ENCODE measurements at regions of chr6 and their contacts with region 1.

Region 1: GRCh38 chr6:28586962-28587745 is 61.5 kb downstream of the GPX5 start:
- DNase-seq: peak; percentile 28 to 73 (median 57)
- ATAC-seq: peak; percentile 82
- H3K4me3 ChIP-seq: peak overlapping the region; percentile 66
- H3K4me3 Mint-ChIP-seq: peak overlapping the region; percentile 90
- H3K27ac ChIP-seq: no peak overlapping the region
- H3K27ac Mint-ChIP-seq: peak overlapping the region; percentile 55
- H3K4me1 ChIP-seq: peaks cover 22% of the 10 kb centered on the region
- H3K4me1 Mint-ChIP-seq: peaks cover 31% of the 10 kb centered on the region
- H3K27me3 ChIP-seq: peaks cover 60 to 80% of the 10 kb centered on the region in 2 experiments
- H3K27me3 Mint-ChIP-seq: peaks cover 83% of the 10 kb centered on the region
- CTCF ChIP-seq: no peak

Region 2: DNA sequence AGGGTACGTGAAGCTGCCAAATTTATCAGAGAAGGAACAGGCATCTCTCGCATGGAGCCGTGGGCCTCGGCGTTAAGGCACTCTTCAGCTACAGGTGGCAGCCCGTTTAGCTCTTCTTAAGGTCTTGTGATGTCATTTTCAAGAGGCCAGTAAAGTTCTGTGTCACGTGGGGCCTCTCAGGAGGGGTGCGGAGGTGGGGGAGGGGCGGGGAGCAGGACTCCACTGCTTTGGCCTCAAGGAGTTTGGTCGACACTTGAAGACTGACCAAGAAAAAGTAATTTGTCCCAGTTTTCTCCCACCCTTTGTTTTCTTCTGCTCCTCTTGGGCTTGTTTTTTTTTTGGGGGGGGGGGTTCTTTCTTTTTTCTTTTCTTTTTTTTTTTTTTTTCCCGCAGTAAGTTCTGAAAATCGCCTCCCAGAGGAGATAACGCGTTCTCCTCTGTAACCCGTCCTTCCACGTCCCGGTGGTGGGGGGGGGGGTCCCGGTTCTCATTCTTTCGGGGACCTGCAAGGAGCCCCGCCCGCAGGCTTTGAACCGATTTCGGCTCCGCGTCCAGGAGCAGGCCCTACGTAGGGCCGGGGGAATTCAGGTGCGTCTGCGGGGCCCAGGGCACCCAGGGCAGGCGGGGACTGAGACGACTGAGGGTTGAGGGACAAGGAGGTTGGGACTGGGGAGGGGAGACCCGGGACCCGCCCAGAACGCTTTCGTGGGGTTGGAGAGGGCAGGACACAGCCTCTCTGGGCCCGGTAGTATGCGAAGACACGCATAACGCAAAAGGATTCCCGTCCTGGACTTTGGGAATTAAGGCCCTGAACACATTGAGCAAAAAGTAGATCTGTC is 97.6 kb before region 1 on chr6:
- CTCF ChIA-PET with region 1: no interaction called
- POLR2A ChIA-PET with region 1: no interaction called
- intact Hi-C with region 1: loop called in 1 of 2 experiments (anchors 10 kb)
- DNase-seq: peak in 12 of 14 experiments; percentile 2 to 65 (median 30)
- ATAC-seq: peak; percentile 66
- H3K4me3 ChIP-seq: peak overlapping the region; percentile 52
- H3K4me3 Mint-ChIP-seq: peak overlapping the region; percentile 90
- H3K27ac ChIP-seq: peak overlapping the region in 1 of 2 donors; percentile 44
- H3K27ac Mint-ChIP-seq: peak overlapping the region; percentile 92
- H3K4me1 ChIP-seq: peaks cover 17% of the 10 kb centered on the region
- H3K4me1 Mint-ChIP-seq: peaks cover 26% of the 10 kb centered on the region
- H3K27me3 ChIP-seq: peaks cover 23 to 54% of the 10 kb centered on the region in 2 experiments
- H3K27me3 Mint-ChIP-seq: peaks cover 85% of the 10 kb centered on the region
- CTCF ChIP-seq: no peak

Measured in CD4-positive, alpha-beta T cell (primary cell).